CD4-positive, alpha-beta T cell (primary cell): ENCODE measurements at regions of chr13 and their contacts with region 1.

Region 1: GRCh38 chr13:23375001-23375971 is 58.2 kb downstream of the SACS start:
- DNase-seq: peak; percentile 95 to 99 (median 98)
- ATAC-seq: peak; percentile 87
- H3K4me3 ChIP-seq: peak overlapping the region; percentile 56
- H3K4me3 Mint-ChIP-seq: peak overlapping the region; percentile 82
- H3K27ac ChIP-seq: no peak overlapping the region
- H3K27ac Mint-ChIP-seq: peak overlapping the region; percentile 61
- H3K4me1 ChIP-seq: peaks cover 48% of the 10 kb centered on the region
- H3K4me1 Mint-ChIP-seq: peaks cover 73% of the 10 kb centered on the region
- H3K27me3 ChIP-seq: no peaks in the 10 kb centered on the region
- H3K27me3 Mint-ChIP-seq: no peaks in the 10 kb centered on the region
- CTCF ChIP-seq: peak; percentile 8

Region 2: GRCh38 chr13:21595546-21595822 is 1779.8 kb before region 1 on chr13:
- CTCF ChIA-PET with region 1: no interaction called
- POLR2A ChIA-PET with region 1: no interaction called
- intact Hi-C with region 1: loop called in 1 of 2 experiments (anchors 10 kb)
- DNase-seq: no peak
- ATAC-seq: no peak
- H3K4me3 ChIP-seq: no peak overlapping the region
- H3K4me3 Mint-ChIP-seq: no peak overlapping the region
- H3K27ac ChIP-seq: no peak overlapping the region
- H3K27ac Mint-ChIP-seq: no peak overlapping the region
- H3K4me1 ChIP-seq: peaks cover 7% of the 10 kb centered on the region
- H3K4me1 Mint-ChIP-seq: peaks cover 85% of the 10 kb centered on the region
- H3K27me3 ChIP-seq: no peaks in the 10 kb centered on the region
- H3K27me3 Mint-ChIP-seq: no peaks in the 10 kb centered on the region
- CTCF ChIP-seq: no peak

Region 3: DNA sequence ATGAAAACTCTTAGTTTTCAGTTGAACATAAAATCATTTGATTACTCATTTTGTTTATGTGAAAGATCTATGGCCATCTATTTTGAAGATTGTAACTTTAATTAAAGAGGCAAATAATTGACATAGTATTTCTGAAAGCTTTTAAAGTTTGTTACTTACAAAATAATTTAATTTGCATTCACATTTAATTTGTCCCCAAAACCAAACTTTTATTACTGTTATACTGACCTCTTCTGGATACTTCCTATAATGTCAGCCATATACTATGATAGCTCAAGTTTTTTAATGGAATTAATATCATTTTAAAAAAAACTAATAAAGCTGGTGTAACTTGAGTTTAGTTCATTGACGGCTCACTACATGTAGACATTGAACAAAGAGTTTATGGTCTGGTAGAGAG is 199.4 kb before region 1 on chr13:
- CTCF ChIA-PET with region 1: no interaction called
- POLR2A ChIA-PET with region 1: no interaction called
- intact Hi-C with region 1: no loop called
- DNase-seq: no peak
- ATAC-seq: no peak
- H3K4me3 ChIP-seq: no peak overlapping the region
- H3K4me3 Mint-ChIP-seq: no peak overlapping the region
- H3K27ac ChIP-seq: no peak overlapping the region
- H3K27ac Mint-ChIP-seq: no peak overlapping the region
- H3K4me1 ChIP-seq: no peaks in the 10 kb centered on the region
- H3K4me1 Mint-ChIP-seq: no peaks in the 10 kb centered on the region
- H3K27me3 ChIP-seq: peaks cover 0 to 4% of the 10 kb centered on the region in 2 experiments
- H3K27me3 Mint-ChIP-seq: peaks cover 4% of the 10 kb centered on the region
- CTCF ChIP-seq: no peak

Region 4: DNA sequence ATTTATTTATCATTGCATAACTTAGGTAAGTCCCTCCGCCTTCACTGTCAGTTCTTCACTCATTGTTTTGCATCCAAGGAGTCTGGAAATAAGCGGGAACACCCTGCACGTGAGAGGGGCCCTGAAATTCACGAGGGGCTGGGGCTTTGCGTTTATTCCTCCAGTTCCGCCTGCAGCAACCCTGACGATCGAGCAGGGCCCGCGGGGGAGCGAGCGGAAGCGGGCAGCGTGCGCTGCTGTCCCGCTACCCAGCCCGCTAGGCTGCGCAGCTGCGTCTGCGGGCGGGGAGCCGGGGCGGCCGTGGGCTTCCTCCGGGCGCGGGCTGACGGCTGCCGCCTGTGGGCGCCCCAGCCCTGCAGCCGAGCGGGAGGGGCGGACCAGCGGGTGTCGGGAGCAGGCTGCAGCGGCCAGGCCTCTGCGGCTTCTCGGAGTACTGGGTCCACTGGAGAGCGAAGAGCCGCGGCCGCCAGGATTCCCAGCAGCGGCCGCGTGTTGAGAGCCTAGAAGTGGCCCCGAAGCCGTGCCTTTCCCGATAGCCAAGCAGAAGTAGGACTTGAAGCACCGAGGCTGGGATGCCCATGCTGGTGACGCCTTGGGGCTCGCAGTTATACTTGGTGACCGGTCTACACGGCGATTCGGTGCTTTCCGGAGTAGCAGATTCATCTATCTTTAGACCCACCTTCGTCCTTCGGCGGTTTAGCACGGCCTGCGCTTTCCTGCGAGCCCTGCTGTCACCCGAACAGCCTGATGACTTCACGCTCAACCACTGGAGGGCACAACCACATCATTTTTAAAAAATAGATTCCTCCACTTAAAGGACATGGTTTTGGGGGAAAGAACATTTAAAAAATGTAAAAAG is 91.1 kb after region 1 on chr13:
- CTCF ChIA-PET with region 1: no interaction called
- POLR2A ChIA-PET with region 1: no interaction called
- intact Hi-C with region 1: loop called in 1 of 2 experiments (anchors 5 kb)
- DNase-seq: peak; percentile 28 to 81 (median 52)
- ATAC-seq: peak; percentile 88
- H3K4me3 ChIP-seq: peak overlapping the region; percentile 49
- H3K4me3 Mint-ChIP-seq: peak overlapping the region; percentile 86
- H3K27ac ChIP-seq: no peak overlapping the region
- H3K27ac Mint-ChIP-seq: no peak overlapping the region
- H3K4me1 ChIP-seq: peaks cover 14% of the 10 kb centered on the region
- H3K4me1 Mint-ChIP-seq: no peaks in the 10 kb centered on the region
- H3K27me3 ChIP-seq: no peaks in the 10 kb centered on the region
- H3K27me3 Mint-ChIP-seq: peaks cover 6% of the 10 kb centered on the region
- CTCF ChIP-seq: peak; percentile 63

Region 5: GRCh38 chr13:23888658-23889614 is 513.6 kb after region 1 on chr13 and contains the start of gene MIPEP:
- CTCF ChIA-PET with region 1: no interaction called
- POLR2A ChIA-PET with region 1: no interaction called
- intact Hi-C with region 1: loop called in 1 of 2 experiments (anchors 2 kb)
- DNase-seq: peak; percentile 68 to 94 (median 85)
- ATAC-seq: peak; percentile 91
- H3K4me3 ChIP-seq: peak within 1 kb of the TSS; percentile 81
- H3K4me3 Mint-ChIP-seq: peak within 1 kb of the TSS; percentile 94
- H3K27ac ChIP-seq: peak within 1 kb of the TSS; percentile 9 to 25
- H3K27ac Mint-ChIP-seq: peak within 1 kb of the TSS; percentile 76
- H3K4me1 ChIP-seq: peaks cover 18% of the 10 kb centered on the region
- H3K4me1 Mint-ChIP-seq: peaks cover 23% of the 10 kb centered on the region
- H3K27me3 ChIP-seq: no peaks in the 10 kb centered on the region
- H3K27me3 Mint-ChIP-seq: no peaks in the 10 kb centered on the region
- CTCF ChIP-seq: peak; percentile 86
- total RNA-seq, gene MIPEP: 3.9 to 4.8 TPM

Region 6: GRCh38 chr13:24254146-24254841 is 879.0 kb after region 1 on chr13:
- CTCF ChIA-PET with region 1: no interaction called
- POLR2A ChIA-PET with region 1: no interaction called
- intact Hi-C with region 1: loop called (anchors 10 kb)
- DNase-seq: peak; percentile 46 to 92 (median 64)
- ATAC-seq: peak; percentile 66
- H3K4me3 ChIP-seq: peak overlapping the region; percentile 78
- H3K4me3 Mint-ChIP-seq: peak overlapping the region; percentile 94
- H3K27ac ChIP-seq: peak overlapping the region; percentile 89 to 92
- H3K27ac Mint-ChIP-seq: peak overlapping the region; percentile 92
- H3K4me1 ChIP-seq: peaks cover 76% of the 10 kb centered on the region
- H3K4me1 Mint-ChIP-seq: peaks cover 91% of the 10 kb centered on the region
- H3K27me3 ChIP-seq: no peaks in the 10 kb centered on the region
- H3K27me3 Mint-ChIP-seq: no peaks in the 10 kb centered on the region
- CTCF ChIP-seq: no peak

Region 7: DNA sequence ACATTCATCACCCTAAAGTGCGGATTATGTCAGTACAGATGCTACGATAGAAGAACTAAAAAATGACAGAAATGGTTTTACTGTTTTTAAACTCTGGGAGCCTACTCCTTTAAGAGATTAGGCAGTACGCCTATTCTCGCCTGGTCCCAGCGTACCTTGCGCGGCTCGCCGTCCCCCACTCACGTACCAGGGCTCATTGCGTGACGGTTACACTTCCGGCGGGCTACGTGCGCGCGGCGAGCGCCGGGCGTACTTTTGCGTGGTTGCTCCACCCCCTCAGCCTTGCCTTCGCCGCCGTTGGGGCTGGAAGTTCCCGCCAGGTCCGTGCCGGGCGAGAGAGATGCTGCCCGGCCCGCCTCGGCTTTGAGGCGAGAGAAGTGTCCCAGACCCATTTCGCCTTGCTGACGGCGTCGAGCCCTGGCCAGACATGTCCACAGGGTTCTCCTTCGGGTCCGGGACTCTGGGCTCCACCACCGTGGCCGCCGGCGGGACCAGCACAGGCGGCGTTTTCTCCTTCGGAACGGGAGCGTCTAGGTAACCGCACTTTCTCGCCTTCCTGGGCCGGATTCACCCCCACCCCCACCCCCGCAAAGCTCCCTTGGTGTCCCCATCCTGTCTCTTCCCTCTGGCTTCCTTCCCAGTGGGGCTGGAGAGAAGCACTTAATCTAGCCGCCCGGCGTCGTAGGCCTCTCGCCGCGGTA is 1926.2 kb after region 1 on chr13 and contains the start of gene NUP58:
- CTCF ChIA-PET with region 1: no interaction called
- POLR2A ChIA-PET with region 1: interaction called, 3 read pairs
- intact Hi-C with region 1: loop called in 1 of 2 experiments (anchors 10 kb)
- DNase-seq: peak; percentile 87 to 98 (median 90)
- ATAC-seq: peak; percentile 97
- H3K4me3 ChIP-seq: peak within 1 kb of the TSS; percentile 80
- H3K4me3 Mint-ChIP-seq: peak within 1 kb of the TSS; percentile 99
- H3K27ac ChIP-seq: peak within 1 kb of the TSS; percentile 92 to 94
- H3K27ac Mint-ChIP-seq: peak within 1 kb of the TSS; percentile 95
- H3K4me1 ChIP-seq: peaks cover 26% of the 10 kb centered on the region
- H3K4me1 Mint-ChIP-seq: peaks cover 49% of the 10 kb centered on the region
- H3K27me3 ChIP-seq: peaks cover 0 to 4% of the 10 kb centered on the region in 2 experiments
- H3K27me3 Mint-ChIP-seq: peaks cover 14% of the 10 kb centered on the region
- CTCF ChIP-seq: no peak
- total RNA-seq, gene NUP58: 56.5 to 60.9 TPM